ENCODE measurements at regions of chr1 and their contacts with region 1.

Region 1: DNA sequence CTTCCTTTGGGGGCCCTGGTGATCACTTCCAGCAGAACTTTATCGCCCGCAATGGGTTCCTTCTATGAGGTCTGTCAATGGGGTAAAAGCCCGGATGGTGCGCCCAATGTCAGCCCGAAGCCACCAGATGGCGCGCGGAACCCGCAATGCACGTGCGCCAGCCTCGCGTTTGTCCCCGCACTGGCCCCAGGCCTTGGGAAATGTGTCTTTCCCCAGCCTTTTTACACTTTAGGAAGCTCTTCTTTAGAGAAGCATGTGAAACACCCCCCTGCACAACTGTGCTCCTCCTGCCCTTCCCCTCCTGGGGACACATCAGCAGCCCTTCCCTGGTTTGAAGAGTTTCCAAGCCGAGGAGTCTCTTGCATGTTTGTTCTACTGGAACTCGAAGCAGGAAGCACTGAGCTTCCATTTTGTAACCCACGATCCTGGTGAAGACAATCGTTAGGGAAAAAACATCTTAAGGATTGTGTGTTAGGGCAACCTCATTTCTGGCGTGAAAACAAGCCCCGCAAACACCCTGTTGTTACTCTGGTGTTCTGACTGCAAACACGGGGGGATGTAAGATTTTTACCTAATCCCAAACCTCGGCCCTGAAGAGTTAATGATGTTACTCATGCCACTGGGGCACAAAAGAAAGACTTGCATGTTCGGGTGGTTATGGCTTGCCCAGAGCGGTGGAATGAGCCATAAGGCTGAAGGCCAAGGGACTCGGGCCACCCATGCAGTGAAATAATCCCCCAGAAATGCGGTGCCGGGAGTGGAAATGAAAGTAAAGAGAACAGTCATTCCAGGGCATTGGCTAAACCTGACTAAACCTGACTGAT is 20.4 kb upstream of the TARBP1 start:
- DNase-seq: peak; percentile 94 to 97
- ATAC-seq: peak; percentile 97
- H3K4me3 ChIP-seq: no peak overlapping the region
- H3K27ac ChIP-seq: peak overlapping the region; percentile 62 to 97
- H3K4me1 ChIP-seq: peaks cover 0 to 15% of the 10 kb centered on the region in 2 donors
- H3K27me3 ChIP-seq: no peaks in the 10 kb centered on the region

Region 2: GRCh38 chr1:234348964-234349363 is 150.4 kb before region 1 on chr1:
- intact Hi-C with region 1: no loop called
- DNase-seq: no peak
- ATAC-seq: no peak
- H3K4me3 ChIP-seq: no peak overlapping the region
- H3K27ac ChIP-seq: no peak overlapping the region
- H3K4me1 ChIP-seq: no peaks in the 10 kb centered on the region
- H3K27me3 ChIP-seq: no peaks in the 10 kb centered on the region

Region 3: GRCh38 chr1:234478481-234479309 is 20.6 kb before region 1 on chr1 and contains the start of gene TARBP1:
- intact Hi-C with region 1: no loop called
- DNase-seq: peak; percentile 83 to 89
- ATAC-seq: peak; percentile 89
- H3K4me3 ChIP-seq: peak within 1 kb of the TSS; percentile 85 to 93
- H3K27ac ChIP-seq: peak within 1 kb of the TSS; percentile 15 to 46
- H3K4me1 ChIP-seq: no peaks in the 10 kb centered on the region
- H3K27me3 ChIP-seq: no peaks in the 10 kb centered on the region
- total RNA-seq, gene TARBP1: 12.4 to 23.2 TPM

Region 4: DNA sequence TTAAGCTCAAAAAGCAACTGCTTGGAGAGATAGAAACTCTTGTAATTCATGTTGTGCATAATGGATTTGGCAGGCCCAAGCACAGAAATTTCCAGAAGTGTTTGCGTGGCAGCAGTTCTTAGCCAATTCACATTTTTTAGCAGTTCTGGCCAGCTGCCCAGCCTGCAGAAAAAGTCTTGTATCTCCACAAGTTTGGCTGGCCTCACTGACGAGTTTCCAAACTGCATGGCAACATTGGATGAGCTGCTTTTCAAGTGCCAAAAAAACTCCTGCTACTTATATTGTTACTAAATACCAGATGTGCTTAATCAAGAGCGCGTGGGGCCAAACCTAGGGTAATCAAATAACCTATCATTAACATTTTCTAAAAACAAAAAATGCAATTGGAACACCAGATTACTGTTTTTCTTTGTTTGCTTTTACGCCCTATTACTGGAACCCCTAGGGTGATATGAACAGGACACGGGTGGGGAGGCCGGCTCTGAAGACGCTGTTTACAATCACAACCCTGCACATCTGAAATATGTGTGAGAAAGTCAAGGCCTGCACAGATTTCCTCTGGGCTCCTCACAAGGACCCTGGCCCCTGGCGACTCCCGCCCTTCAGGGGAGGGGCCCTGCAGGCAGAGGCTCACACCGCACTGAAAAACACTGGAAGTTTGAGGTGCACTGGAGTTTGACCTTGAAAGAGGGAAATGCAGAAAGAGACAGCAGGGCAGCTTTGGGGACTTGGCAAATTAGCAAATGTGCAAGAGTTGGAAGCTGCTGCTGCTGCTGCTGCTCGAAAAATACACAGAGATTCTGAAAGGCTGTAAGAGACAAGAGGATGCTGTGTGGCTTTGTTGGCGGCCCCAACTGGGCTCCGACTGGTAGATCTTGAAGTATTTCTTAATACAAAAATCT is 34.9 kb after region 1 on chr1:
- intact Hi-C with region 1: loop called in 1 of 2 experiments (anchors 2 kb)
- DNase-seq: peak; percentile 94 to 97
- ATAC-seq: peak; percentile 21
- H3K4me3 ChIP-seq: no peak overlapping the region
- H3K27ac ChIP-seq: peak overlapping the region; percentile 97 to 99
- H3K4me1 ChIP-seq: peaks cover 3 to 18% of the 10 kb centered on the region in 2 donors
- H3K27me3 ChIP-seq: no peaks in the 10 kb centered on the region

Region 5: GRCh38 chr1:234691567-234691966 is 192.2 kb after region 1 on chr1:
- intact Hi-C with region 1: no loop called
- DNase-seq: no peak
- ATAC-seq: no peak
- H3K4me3 ChIP-seq: no peak overlapping the region
- H3K27ac ChIP-seq: no peak overlapping the region
- H3K4me1 ChIP-seq: no peaks in the 10 kb centered on the region
- H3K27me3 ChIP-seq: no peaks in the 10 kb centered on the region

Region 6: GRCh38 chr1:234918181-234918841 is 419.0 kb after region 1 on chr1:
- intact Hi-C with region 1: loop called (anchors 5 to 10 kb)
- DNase-seq: peak; percentile 74 to 80
- ATAC-seq: peak; percentile 74
- H3K4me3 ChIP-seq: no peak overlapping the region
- H3K27ac ChIP-seq: peak overlapping the region; percentile 51 to 97
- H3K4me1 ChIP-seq: peaks cover 2 to 3% of the 10 kb centered on the region in 2 donors
- H3K27me3 ChIP-seq: no peaks in the 10 kb centered on the region

Region 7: DNA sequence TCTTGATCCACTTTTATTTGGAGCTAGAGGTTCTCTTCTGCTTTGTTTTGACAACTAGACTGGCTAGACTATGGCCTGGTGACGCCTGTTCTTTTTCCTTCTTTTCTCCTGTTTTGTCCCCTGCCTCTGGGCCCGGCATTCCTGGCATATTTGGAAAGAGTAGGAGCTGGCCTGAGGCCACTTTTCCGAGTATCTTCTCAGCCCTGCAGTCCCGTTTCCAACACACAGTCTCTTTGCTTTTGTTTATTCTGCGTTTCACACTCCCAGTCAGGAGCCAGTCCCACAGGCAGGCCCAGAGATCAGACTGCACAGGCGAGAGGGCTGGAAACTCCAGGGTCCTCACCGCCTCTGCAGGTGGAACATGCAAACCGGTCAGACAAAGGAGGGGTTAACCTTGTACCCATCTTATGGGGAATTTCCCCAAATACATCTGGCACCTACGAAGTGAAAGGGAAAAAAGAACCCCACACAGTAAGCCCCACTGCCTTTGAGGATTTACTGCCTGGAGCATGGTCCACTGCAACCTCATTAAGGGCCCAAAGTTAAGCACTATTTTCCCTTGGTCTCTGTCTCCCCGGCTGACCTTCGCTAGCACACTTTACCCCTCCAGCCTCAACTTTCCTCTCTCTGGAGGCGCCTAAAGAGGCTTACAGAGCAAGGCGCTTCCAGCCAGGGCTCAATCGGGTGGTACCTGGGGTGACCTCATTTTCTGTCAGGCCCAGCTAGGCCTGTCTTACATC is 488.3 kb after region 1 on chr1:
- intact Hi-C with region 1: loop called (anchors 5 kb)
- DNase-seq: peak; percentile 88 to 89
- ATAC-seq: peak; percentile 85
- H3K4me3 ChIP-seq: no peak overlapping the region
- H3K27ac ChIP-seq: peak overlapping the region; percentile 97 to 100
- H3K4me1 ChIP-seq: peaks cover 4 to 5% of the 10 kb centered on the region in 2 donors
- H3K27me3 ChIP-seq: no peaks in the 10 kb centered on the region

Region 8: DNA sequence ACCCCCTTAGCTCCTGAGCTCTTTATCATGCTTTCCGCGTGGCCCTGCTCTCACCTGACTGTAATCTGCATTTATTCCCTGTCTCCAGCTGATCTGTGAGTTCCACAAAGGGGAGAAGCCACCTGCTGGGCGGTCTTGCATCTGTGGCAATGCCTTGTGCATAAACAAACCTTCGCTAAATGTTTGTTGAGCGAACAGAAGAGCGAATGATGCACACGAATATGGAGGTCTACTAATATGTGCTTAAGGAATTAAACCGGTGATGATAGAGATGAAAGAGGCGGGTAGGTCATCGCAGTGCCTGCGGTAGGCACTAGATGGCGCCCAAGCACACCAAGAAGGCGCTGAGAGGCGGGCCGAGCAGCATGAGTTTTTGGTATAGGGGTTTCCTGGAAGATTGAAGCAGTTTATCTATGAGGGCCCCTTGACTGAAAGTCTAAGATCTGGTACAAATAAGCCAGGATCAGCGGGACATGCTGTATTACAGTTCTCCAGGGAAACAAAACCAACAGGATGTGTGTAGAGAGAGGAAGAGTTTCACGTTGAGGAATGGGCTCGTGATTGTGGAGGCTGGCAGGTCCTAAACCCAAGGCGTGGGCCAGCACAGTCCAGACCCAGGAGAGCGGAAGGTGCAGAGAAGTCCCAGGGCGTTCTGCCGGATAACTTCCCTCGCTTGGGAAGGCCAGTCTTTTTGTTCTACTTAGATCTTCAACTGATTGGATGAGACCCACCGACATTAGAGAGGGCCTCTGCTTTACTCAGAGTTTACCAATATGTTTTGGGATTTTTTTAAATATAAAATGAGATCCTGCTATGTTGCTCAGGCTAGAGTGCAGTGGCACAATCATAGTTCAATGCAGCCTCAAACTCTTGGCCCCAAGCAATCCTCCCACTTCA is 594.6 kb after region 1 on chr1:
- intact Hi-C with region 1: loop called in 1 of 2 experiments (anchors 2 kb)
- DNase-seq: peak; percentile 79 to 93
- ATAC-seq: peak; percentile 88
- H3K4me3 ChIP-seq: no peak overlapping the region
- H3K27ac ChIP-seq: no peak overlapping the region
- H3K4me1 ChIP-seq: no peaks in the 10 kb centered on the region
- H3K27me3 ChIP-seq: no peaks in the 10 kb centered on the region